Right ventricle myocardium inferior (tissue), 1 donor: ENCODE measurements at regions of chr1 and their contacts with region 1.

Region 1: DNA sequence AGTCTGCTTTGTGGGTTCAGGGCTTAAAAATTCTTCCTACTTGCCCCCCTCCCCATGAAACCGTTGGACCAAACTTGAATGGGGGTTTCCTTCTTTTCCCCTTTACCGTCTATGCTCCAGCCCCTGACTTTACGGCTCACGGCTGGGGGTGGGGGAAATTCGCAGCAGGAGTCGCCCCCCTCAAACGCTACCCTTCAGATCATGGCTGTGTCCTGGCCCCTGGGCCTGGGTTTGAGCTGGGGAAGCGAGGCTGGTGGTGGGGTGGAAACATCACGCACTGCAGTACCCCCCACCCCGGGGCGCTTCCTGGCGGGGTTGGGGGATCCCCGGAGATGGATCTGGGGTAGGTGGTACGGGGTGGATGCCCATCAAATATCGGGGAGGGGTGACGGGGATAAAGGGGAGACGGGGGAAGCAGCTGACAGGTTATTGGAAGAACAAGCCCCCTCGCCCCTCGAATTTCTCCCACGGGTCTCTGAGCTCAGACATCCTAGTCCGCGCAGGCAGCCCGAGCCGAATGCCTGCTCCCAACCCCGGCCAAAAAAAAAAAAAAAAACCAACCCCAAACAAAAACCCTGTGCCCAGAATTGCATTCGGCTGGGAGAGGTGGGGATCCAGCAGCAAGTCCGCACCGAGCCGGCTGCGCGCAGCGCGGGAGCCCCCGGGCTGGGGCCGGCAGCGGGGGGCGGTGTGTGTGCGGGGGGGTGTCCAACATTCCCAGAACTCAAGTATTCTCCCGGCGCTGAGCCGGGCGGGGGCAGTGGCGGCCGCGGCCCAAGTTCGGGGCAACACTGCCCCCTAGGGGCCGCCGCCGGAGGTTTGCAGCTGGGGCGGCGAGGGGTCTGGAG is 59.0 kb upstream of the ACOT11 start:
- DNase-seq: peak; percentile 93
- ATAC-seq: peak; percentile 81

Region 2: GRCh38 chr1:53945433-53946251 is 543.4 kb before region 1 on chr1 and contains the start of gene IFT25:
- intact Hi-C with region 1: loop called (anchors 5 kb)
- DNase-seq: peak; percentile 98
- ATAC-seq: peak; percentile 95
- total RNA-seq, gene IFT25: 11.9 TPM

Region 3: GRCh38 chr1:54121482-54122134 is 367.4 kb before region 1 on chr1:
- intact Hi-C with region 1: loop called (anchors 1 kb)
- DNase-seq: peak; percentile 86
- ATAC-seq: peak; percentile 89

Region 4: DNA sequence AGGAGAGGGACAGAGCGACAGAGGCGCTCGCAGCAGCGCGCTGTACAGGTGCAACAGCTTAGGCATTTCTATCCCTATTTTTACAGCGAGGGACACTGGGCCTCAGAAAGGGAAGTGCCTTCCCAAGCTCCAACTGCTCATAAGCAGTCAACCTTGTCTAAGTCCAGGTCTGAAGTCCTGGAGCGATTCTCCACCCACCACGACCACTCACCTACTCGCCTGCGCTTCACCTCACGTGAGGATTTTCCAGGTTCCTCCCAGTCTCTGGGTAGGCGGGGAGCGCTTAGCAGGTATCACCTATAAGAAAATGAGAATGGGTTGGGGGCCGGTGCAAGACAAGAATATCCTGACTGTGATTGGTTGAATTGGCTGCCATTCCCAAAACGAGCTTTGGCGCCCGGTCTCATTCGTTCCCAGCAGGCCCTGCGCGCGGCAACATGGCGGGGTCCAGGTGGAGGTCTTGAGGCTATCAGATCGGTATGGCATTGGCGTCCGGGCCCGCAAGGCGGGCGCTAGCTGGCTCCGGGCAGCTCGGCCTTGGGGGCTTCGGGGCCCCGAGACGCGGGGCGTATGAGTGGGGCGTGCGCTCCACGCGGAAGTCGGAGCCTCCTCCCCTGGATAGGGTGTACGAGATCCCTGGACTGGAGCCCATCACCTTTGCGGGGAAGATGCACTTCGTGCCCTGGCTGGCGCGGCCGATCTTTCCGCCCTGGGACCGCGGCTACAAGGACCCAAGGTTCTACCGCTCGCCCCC is 289.1 kb before region 1 on chr1 and contains the starts of genes CYB5RL and MRPL37:
- intact Hi-C with region 1: loop called (anchors 10 kb)
- DNase-seq: peak; percentile 95
- ATAC-seq: peak; percentile 99
- total RNA-seq, gene CYB5RL: 3.9 TPM
- total RNA-seq, gene MRPL37: 85.2 TPM

Region 5: GRCh38 chr1:54310439-54311328 is 178.3 kb before region 1 on chr1:
- intact Hi-C with region 1: loop called (anchors 2 kb)
- DNase-seq: no peak
- ATAC-seq: no peak